PC-9 (cell line): ENCODE measurements at regions of chr11 and their contacts with region 1.

Region 1: DNA sequence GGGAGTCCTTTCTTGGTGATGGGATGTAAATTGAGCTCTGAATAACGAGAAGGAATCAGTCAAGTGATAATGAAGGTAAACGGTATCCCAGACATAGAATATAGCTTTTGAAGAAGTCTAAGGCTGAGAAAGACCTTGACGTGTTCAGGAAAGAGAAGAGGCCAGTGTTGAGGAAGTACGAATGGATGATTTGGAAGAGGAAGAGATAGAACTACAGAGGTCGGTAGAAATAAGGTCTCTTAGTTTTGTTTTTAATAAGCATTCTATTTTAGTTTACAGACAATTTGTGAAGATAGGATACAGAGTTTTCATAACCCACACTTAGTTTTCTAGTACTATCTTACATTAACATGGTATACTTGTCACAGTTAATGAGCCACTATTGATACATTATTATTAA is 1598.1 kb downstream of the FAM181B start:
- DNase-seq: no peak
- H3K4me3 ChIP-seq: no peak overlapping the region
- H3K27ac ChIP-seq: no peak overlapping the region
- H3K4me1 ChIP-seq: no peaks in the 10 kb centered on the region
- H3K27me3 ChIP-seq: no peaks in the 10 kb centered on the region
- CTCF ChIP-seq: no peak

Region 2: GRCh38 chr11:79314906-79315681 is 1820.5 kb before region 1 on chr11:
- CTCF ChIA-PET with region 1: no interaction called
- POLR2A ChIA-PET with region 1: interaction called, 10 read pairs
- intact Hi-C with region 1: no loop called
- DNase-seq: no peak
- H3K4me3 ChIP-seq: no peak overlapping the region
- H3K27ac ChIP-seq: no peak overlapping the region
- H3K4me1 ChIP-seq: no peaks in the 10 kb centered on the region
- H3K27me3 ChIP-seq: peaks cover 45% of the 10 kb centered on the region
- CTCF ChIP-seq: no peak